Psoas muscle (tissue), 8 donors: ENCODE measurements at regions of chr10 and their contacts with region 1.

Region 1: DNA sequence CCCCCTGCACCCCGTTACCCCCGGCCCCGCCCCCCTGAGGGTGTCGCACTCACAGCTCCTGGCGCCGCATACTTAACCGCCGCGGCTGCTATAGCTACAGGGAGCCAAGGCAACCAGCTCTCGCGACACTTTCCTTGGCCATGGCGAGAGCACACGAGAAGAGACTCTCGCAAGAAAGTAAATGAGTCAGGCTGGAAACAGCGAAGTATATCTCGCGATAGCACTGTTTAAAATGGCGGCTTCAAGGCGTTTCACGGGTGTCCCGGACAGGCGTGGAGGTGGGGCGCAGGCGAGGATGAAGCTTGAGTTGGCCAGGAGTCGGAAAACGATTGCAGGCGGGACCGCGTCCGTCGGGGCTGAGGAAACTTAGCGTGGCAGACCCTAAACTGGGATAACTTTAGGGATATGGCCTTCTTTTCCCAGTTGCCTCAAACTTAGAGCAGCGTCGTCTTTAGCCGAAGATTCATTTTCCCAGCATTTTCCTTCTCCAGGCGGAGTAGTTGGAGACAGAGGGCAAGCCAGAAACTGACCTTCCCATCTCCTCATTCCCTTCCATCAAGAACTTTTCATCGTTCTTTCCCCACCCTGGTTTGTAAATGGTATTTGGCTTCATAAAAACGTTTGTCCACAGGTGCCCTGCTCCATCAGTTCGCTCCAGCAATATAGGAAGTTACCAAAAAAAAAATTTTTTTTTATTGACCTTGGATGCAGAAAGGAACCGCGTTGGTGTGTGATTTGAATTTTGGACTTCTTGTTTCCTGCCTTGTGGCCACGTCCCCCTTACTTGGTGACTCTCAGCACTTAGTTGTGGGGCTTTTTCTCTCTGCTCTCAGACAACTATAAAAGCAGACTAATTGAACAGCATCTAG is 15.2 kb downstream of the MYOZ1 start:
- DNase-seq: peak; percentile 90 to 96
- ATAC-seq: peak; percentile 96
- H3K4me3 ChIP-seq: peak overlapping the region; percentile 93
- H3K27ac ChIP-seq: peak overlapping the region; percentile 95
- H3K4me1 ChIP-seq: peaks cover 4% of the 10 kb centered on the region
- H3K27me3 ChIP-seq: no peaks in the 10 kb centered on the region
- CTCF ChIP-seq: no peak

Region 2: GRCh38 chr10:73591935-73592699 is 34.0 kb before region 1 on chr10:
- intact Hi-C with region 1: loop called in 1 of 2 experiments (anchors 5 kb)
- DNase-seq: no peak
- ATAC-seq: peak; percentile 67 to 87 (median 82)
- H3K4me3 ChIP-seq: peak overlapping the region; percentile 11
- H3K27ac ChIP-seq: peak overlapping the region; percentile 56
- H3K4me1 ChIP-seq: peaks cover 31% of the 10 kb centered on the region
- H3K27me3 ChIP-seq: no peaks in the 10 kb centered on the region
- CTCF ChIP-seq: no peak